B cell (primary cell): ENCODE measurements at regions of chr15 and their contacts with region 1.

Region 1: DNA sequence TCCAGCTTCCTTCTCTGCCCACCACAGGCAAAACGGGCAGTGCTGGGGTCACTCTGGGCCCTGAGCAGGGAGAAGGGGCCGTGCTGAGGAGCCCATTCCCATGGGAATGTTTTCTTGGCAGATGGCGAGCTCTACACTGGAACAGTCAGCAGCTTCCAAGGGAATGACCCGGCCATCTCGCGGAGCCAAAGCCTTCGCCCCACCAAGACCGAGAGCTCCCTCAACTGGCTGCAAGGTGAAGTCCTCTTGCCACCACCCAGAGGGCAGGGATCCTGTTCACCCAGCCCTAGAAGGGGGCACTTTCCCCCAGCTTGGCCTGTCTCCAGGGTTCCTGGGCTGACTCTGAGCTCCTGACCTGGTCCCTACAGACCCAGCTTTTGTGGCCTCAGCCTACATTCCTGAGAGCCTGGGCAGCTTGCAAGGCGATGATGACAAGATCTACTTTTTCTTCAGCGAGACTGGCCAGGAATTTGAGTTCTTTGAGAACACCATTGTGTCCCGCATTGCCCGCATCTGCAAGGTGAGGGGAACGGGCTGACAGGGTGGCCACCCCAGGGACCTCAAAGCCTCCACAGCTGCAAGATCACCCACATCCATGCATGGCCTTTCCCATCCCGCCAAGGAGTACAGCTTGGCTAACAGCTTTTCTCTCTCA is 12.4 kb downstream of the CIB1 start:
- DNase-seq: no peak
- ATAC-seq: no peak
- H3K4me3 ChIP-seq: no peak overlapping the region
- H3K4me3 Mint-ChIP-seq: peak overlapping the region; percentile 23
- H3K27ac ChIP-seq: peak overlapping the region in 1 of 2 donors; percentile 39
- H3K27ac Mint-ChIP-seq: peak overlapping the region; percentile 72
- H3K4me1 ChIP-seq: peaks cover 41 to 50% of the 10 kb centered on the region in 2 donors
- H3K4me1 Mint-ChIP-seq: peaks cover 52% of the 10 kb centered on the region
- H3K27me3 ChIP-seq: no peaks in the 10 kb centered on the region
- H3K27me3 Mint-ChIP-seq: no peaks in the 10 kb centered on the region
- CTCF ChIP-seq: peak; percentile 36

Region 2: GRCh38 chr15:90059208-90059985 is 162.0 kb before region 1 on chr15:
- CTCF ChIA-PET with region 1: no interaction called
- POLR2A ChIA-PET with region 1: no interaction called
- intact Hi-C with region 1: no loop called
- DNase-seq: peak; percentile 96
- ATAC-seq: peak; percentile 88
- H3K4me3 ChIP-seq: peak overlapping the region in 1 of 5 experiments; percentile 22
- H3K4me3 Mint-ChIP-seq: peak overlapping the region; percentile 80
- H3K27ac ChIP-seq: peak overlapping the region; percentile 82 to 88
- H3K27ac Mint-ChIP-seq: peak overlapping the region; percentile 98
- H3K4me1 ChIP-seq: peaks cover 54 to 93% of the 10 kb centered on the region in 2 donors
- H3K4me1 Mint-ChIP-seq: peaks cover 81% of the 10 kb centered on the region
- H3K27me3 ChIP-seq: no peaks in the 10 kb centered on the region
- H3K27me3 Mint-ChIP-seq: no peaks in the 10 kb centered on the region
- CTCF ChIP-seq: no peak

Region 3: DNA sequence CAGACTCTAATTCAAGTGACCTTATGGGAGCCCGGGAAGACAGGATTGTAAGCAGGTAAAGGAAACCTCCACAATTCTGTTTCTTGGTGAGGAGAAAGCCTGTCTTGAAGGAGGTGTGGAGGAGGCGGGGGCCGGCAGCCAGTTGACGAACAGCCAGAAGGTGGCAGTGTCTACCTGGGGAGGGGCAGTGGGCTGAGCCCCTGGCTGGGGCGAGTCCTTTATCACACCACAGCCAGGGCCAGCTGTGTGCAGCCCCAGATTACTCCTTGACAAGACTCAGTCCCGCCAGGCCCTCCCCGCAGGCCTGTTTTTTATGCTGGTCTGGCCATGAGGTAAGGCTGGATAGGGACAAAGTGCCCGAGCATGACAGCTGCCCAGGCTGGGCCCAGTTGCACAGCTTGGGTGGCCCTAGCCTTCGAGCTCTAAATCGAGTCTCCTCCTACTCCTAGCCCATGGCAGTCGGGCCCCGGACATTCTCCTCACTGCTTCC is 78.2 kb before region 1 on chr15:
- CTCF ChIA-PET with region 1: interaction called, 23 read pairs
- POLR2A ChIA-PET with region 1: no interaction called
- intact Hi-C with region 1: no loop called
- DNase-seq: peak; percentile 74
- ATAC-seq: peak; percentile 95
- H3K4me3 ChIP-seq: no peak overlapping the region
- H3K4me3 Mint-ChIP-seq: no peak overlapping the region
- H3K27ac ChIP-seq: no peak overlapping the region
- H3K27ac Mint-ChIP-seq: no peak overlapping the region
- H3K4me1 ChIP-seq: peaks cover 0 to 6% of the 10 kb centered on the region in 2 donors
- H3K4me1 Mint-ChIP-seq: peaks cover 3% of the 10 kb centered on the region
- H3K27me3 ChIP-seq: no peaks in the 10 kb centered on the region
- H3K27me3 Mint-ChIP-seq: peaks cover 8% of the 10 kb centered on the region
- CTCF ChIP-seq: peak; percentile 84

Region 4: DNA sequence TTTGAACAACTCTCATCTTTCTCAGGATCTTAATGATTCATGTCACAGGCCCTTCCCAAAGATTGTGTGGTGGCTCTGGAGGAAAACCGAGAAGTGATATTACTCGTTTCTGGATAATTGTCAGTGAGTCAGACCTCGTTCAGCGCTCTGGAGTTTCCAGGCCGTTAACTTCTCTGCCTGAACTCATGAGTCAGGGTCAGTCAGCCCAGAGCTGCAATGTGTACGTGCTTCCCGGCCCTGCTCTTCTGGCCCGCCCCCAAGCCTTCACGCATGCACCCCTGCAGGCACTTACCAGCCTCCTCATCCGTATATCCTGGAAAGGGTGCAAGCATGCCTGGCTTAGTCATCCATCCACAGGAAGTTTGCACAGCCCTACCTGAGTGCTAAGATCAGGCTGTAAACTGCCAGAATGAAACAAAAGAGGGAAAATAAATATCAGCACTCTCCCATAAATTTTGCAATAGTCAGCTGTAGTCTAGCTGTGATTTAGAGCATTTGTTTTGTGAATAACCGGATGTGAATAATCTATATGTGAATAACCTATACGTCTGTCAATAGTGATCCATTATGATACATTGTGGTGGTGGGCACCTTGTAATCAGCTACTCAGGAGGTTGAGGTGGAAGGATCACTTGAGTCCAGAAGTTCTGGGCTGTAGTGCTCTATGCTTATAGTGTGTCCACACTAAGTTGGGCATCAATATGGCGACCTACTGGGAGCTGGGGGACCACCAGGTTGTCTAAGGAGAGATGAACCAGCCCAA is 55.5 kb before region 1 on chr15:
- CTCF ChIA-PET with region 1: interaction called, 3 read pairs
- POLR2A ChIA-PET with region 1: interaction called, 36 read pairs
- intact Hi-C with region 1: loop called (anchors 1 kb)
- DNase-seq: no peak
- ATAC-seq: peak; percentile 53
- H3K4me3 ChIP-seq: no peak overlapping the region
- H3K4me3 Mint-ChIP-seq: peak overlapping the region; percentile 30
- H3K27ac ChIP-seq: no peak overlapping the region
- H3K27ac Mint-ChIP-seq: peak overlapping the region; percentile 59
- H3K4me1 ChIP-seq: peaks cover 22 to 40% of the 10 kb centered on the region in 2 donors
- H3K4me1 Mint-ChIP-seq: peaks cover 56% of the 10 kb centered on the region
- H3K27me3 ChIP-seq: no peaks in the 10 kb centered on the region
- H3K27me3 Mint-ChIP-seq: no peaks in the 10 kb centered on the region
- CTCF ChIP-seq: no peak

Region 5: DNA sequence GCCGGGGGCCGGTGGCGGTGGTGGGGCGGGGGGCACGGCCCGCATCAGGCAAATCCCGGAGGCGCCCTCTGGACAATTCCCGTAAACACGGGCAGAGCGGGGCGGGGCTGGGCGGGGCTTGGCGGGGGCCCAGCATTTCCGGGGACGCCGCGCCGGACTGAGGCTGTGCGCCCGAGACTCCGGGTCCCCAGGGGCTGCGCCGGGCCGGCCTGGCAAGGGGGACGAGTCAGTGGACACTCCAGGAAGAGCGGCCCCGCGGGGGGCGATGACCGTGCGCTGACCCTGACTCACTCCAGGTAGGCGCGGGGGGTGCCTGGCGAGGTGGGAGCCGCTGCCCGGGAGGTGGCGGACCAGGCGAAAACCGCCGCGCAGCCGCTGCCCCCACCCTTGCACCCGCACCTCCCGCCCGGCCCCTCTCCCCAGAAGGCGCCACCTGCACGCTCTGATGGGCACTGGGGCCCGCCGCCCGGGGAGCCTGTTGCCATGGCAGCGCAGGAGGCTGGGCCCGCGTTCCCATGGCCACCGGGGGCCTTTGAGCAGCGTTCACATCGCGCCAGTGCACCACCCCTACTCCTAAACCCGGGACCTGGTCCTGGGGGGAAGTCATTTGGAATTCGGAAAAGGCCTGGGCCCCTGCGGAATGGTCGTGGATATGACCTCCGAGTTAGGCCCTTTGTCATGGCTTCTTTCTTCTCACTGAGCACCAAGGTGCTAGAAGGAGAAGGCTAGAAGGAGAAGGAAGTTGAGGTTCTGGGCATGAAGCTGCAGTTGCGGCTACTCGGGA is 36.4 kb before region 1 on chr15:
- CTCF ChIA-PET with region 1: interaction called, 274 read pairs
- POLR2A ChIA-PET with region 1: interaction called, 163 read pairs
- intact Hi-C with region 1: loop called (anchors 1 kb)
- DNase-seq: peak; percentile 89
- ATAC-seq: peak; percentile 76
- H3K4me3 ChIP-seq: peak overlapping the region; percentile 61 to 79 (median 77)
- H3K4me3 Mint-ChIP-seq: peak overlapping the region; percentile 98
- H3K27ac ChIP-seq: peak overlapping the region; percentile 81 to 88
- H3K27ac Mint-ChIP-seq: peak overlapping the region; percentile 97
- H3K4me1 ChIP-seq: peaks cover 56 to 68% of the 10 kb centered on the region in 2 donors
- H3K4me1 Mint-ChIP-seq: peaks cover 67% of the 10 kb centered on the region
- H3K27me3 ChIP-seq: no peaks in the 10 kb centered on the region
- H3K27me3 Mint-ChIP-seq: no peaks in the 10 kb centered on the region
- CTCF ChIP-seq: no peak

Region 6: DNA sequence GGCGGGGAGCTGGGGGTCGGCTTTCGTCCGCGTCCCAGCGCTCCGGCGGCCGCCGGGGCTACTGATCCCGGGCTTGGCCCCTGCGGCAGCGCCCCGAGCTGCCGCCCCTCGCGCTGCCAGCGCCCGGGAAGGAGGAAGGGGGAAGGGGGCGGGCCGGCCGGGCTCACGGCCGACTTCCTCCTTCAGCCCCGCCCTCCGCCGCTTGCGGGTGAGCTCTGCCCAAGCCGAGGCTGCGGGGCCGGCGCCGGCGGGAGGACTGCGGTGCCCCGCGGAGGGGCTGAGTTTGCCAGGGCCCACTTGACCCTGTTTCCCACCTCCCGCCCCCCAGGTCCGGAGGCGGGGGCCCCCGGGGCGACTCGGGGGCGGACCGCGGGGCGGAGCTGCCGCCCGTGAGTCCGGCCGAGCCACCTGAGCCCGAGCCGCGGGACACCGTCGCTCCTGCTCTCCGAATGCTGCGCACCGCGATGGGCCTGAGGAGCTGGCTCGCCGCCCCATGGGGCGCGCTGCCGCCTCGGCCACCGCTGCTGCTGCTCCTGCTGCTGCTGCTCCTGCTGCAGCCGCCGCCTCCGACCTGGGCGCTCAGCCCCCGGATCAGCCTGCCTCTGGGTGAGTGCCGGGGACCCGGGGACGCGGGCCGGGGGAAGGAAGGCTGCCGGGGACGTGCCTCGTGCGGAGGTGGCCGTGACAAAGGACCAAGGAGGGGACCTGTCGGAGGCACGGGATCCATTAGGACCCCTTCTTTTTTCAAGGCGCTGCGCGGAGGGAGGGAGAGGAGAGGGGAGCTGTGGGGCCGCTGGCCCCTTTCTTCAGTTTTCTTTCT is 20.0 kb before region 1 on chr15 and contains the start of gene SEMA4B:
- CTCF ChIA-PET with region 1: interaction called, 274 read pairs
- POLR2A ChIA-PET with region 1: interaction called, 76 read pairs
- intact Hi-C with region 1: no loop called
- DNase-seq: peak; percentile 84
- ATAC-seq: peak; percentile 89
- H3K4me3 ChIP-seq: peak within 1 kb of the TSS; percentile 79 to 94 (median 86)
- H3K4me3 Mint-ChIP-seq: peak within 1 kb of the TSS; percentile 93
- H3K27ac ChIP-seq: peak within 1 kb of the TSS; percentile 52 to 72
- H3K27ac Mint-ChIP-seq: peak within 1 kb of the TSS; percentile 95
- H3K4me1 ChIP-seq: peaks cover 64 to 78% of the 10 kb centered on the region in 2 donors
- H3K4me1 Mint-ChIP-seq: peaks cover 73% of the 10 kb centered on the region
- H3K27me3 ChIP-seq: no peaks in the 10 kb centered on the region
- H3K27me3 Mint-ChIP-seq: no peaks in the 10 kb centered on the region
- CTCF ChIP-seq: no peak
- total RNA-seq, gene SEMA4B: 334 and 336 TPM in 2 replicates